ENCODE measurements at regions of chr21 and their contacts with region 1.

Region 1: DNA sequence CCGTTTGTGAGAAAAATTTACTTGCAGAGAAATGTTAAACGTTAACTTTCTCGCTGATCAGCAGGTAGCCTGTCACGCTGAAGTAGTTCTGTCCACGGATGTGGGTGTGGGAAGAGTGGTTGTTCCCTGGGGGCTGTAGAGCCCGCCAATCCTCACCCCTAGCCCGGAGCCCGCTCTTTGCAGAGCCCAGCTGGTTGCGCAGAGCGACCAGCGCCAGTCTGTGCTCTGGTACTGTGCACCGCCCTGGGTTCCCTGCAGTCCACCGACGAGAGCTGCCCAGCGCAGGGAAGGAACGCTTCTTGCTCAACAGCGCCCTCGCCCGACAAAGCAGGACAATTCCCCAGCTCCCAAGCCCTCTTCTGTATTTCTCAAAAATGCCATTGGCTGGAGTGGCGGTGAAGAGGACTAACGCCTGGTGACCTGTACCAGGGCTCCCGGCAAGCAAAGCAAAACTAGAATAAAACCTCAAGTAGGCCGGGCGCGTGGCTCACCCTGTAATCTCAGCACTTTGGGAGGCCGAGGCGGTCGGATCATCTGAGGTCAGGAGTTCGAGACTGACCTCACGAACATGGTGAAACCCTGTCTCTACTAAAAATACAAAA is 3.3 kb downstream of the RIPPLY3 start:
- DNase-seq: peak; percentile 81
- ATAC-seq: peak; percentile 92
- H3K4me3 Mint-ChIP-seq: peak overlapping the region; percentile 56
- H3K27ac Mint-ChIP-seq: no peak overlapping the region
- H3K4me1 Mint-ChIP-seq: peaks cover 9% of the 10 kb centered on the region
- H3K27me3 Mint-ChIP-seq: peaks cover 38% of the 10 kb centered on the region
- CTCF ChIP-seq: peak; percentile 88

Region 2: GRCh38 chr21:36934864-36935420 is 74.9 kb before region 1 on chr21:
- CTCF ChIA-PET with region 1: interaction called, 8 read pairs
- POLR2A ChIA-PET with region 1: no interaction called
- intact Hi-C with region 1: loop called (anchors 2 kb)
- DNase-seq: no peak
- ATAC-seq: no peak
- H3K4me3 Mint-ChIP-seq: no peak overlapping the region
- H3K27ac Mint-ChIP-seq: no peak overlapping the region
- H3K4me1 Mint-ChIP-seq: no peaks in the 10 kb centered on the region
- H3K27me3 Mint-ChIP-seq: no peaks in the 10 kb centered on the region
- CTCF ChIP-seq: no peak

Region 3: GRCh38 chr21:36976882-36977651 is 32.8 kb before region 1 on chr21:
- CTCF ChIA-PET with region 1: interaction called, 14 read pairs
- POLR2A ChIA-PET with region 1: no interaction called
- intact Hi-C with region 1: no loop called
- DNase-seq: peak; percentile 84
- ATAC-seq: peak; percentile 93
- H3K4me3 Mint-ChIP-seq: no peak overlapping the region
- H3K27ac Mint-ChIP-seq: peak overlapping the region; percentile 69
- H3K4me1 Mint-ChIP-seq: peaks cover 32% of the 10 kb centered on the region
- H3K27me3 Mint-ChIP-seq: peaks cover 1% of the 10 kb centered on the region
- CTCF ChIP-seq: peak; percentile 77

Region 4: GRCh38 chr21:37145635-37146111 is 135.8 kb after region 1 on chr21:
- CTCF ChIA-PET with region 1: no interaction called
- POLR2A ChIA-PET with region 1: no interaction called
- intact Hi-C with region 1: no loop called
- DNase-seq: no peak
- ATAC-seq: no peak
- H3K4me3 Mint-ChIP-seq: no peak overlapping the region
- H3K27ac Mint-ChIP-seq: no peak overlapping the region
- H3K4me1 Mint-ChIP-seq: peaks cover 10% of the 10 kb centered on the region
- H3K27me3 Mint-ChIP-seq: no peaks in the 10 kb centered on the region
- CTCF ChIP-seq: no peak

Region 5: GRCh38 chr21:37452227-37452626 is 442.4 kb after region 1 on chr21:
- CTCF ChIA-PET with region 1: no interaction called
- POLR2A ChIA-PET with region 1: no interaction called
- intact Hi-C with region 1: no loop called
- DNase-seq: no peak
- ATAC-seq: no peak
- H3K4me3 Mint-ChIP-seq: no peak overlapping the region
- H3K27ac Mint-ChIP-seq: no peak overlapping the region
- H3K4me1 Mint-ChIP-seq: peaks cover 74% of the 10 kb centered on the region
- H3K27me3 Mint-ChIP-seq: no peaks in the 10 kb centered on the region
- CTCF ChIP-seq: no peak